ENCODE measurements at regions of chr3 and their contacts with region 1.

Region 1: GRCh38 chr3:187745201-187746058 is at the start of gene BCL6:
- DNase-seq: peak; percentile 96
- ATAC-seq: peak; percentile 88
- H3K4me3 ChIP-seq: peak within 1 kb of the TSS; percentile 84 to 90
- H3K27ac ChIP-seq: peak within 1 kb of the TSS; percentile 99 to 100
- H3K4me1 ChIP-seq: peaks cover 0 to 6% of the 10 kb centered on the region in 2 donors
- H3K27me3 ChIP-seq: no peaks in the 10 kb centered on the region
- total RNA-seq, gene BCL6: 136 to 154 TPM

Region 2: GRCh38 chr3:186759231-186759930 is 986.0 kb before region 1 on chr3:
- intact Hi-C with region 1: no loop called
- DNase-seq: no peak
- ATAC-seq: no peak
- H3K4me3 ChIP-seq: no peak overlapping the region
- H3K27ac ChIP-seq: no peak overlapping the region
- H3K4me1 ChIP-seq: no peaks in the 10 kb centered on the region
- H3K27me3 ChIP-seq: no peaks in the 10 kb centered on the region

Region 3: DNA sequence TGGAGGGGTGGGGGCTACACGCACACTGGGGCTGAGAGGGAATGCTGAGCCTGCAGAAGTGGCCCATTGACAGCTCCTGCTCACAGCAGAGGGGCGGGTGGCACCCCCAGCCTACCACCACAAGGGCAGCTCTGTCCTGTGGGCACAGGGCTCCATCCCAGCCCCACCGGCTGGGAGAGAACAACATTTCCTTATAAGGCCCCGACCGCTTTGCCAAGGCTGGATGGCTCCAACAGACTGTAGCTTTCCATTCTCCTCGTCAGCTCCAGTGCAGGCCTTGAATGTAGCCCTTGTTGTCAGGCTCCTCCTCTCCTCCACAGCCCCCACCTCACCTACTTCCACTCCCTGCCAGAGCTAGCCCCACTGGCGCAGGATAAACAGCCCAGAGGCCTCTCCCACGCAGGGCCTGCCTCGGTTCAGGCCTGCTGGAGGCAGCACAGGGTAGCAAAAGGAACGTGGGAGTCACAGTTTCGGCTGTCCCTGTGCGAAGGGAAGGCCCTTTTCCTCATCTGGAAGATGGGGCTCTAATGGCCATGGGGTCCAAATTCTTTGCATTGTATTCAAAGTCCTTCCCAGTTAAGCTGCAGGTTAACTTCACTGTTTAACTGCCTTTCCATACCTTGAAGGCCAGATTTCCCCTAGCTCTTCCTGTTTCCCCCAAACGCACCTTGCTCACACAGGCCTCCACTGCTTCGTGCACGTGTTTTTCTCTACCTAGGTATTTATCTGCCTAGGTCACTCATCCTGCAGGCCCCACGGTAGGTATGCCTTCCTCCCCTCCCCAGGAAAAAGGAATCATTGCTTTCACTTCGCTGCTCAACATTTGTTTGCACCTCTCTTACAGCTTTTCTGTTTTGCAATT is 307.0 kb after region 1 on chr3:
- intact Hi-C with region 1: loop called (anchors 5 kb)
- DNase-seq: peak; percentile 92
- ATAC-seq: peak; percentile 96
- H3K4me3 ChIP-seq: no peak overlapping the region
- H3K27ac ChIP-seq: peak overlapping the region; percentile 72 to 89
- H3K4me1 ChIP-seq: no peaks in the 10 kb centered on the region
- H3K27me3 ChIP-seq: no peaks in the 10 kb centered on the region

Region 4: GRCh38 chr3:188362405-188362831 is 617.0 kb after region 1 on chr3:
- intact Hi-C with region 1: loop called in 1 of 2 experiments (anchors 10 kb)
- DNase-seq: no peak
- ATAC-seq: no peak
- H3K4me3 ChIP-seq: no peak overlapping the region
- H3K27ac ChIP-seq: no peak overlapping the region
- H3K4me1 ChIP-seq: peaks cover 12 to 15% of the 10 kb centered on the region in 2 donors
- H3K27me3 ChIP-seq: no peaks in the 10 kb centered on the region

Region 5: DNA sequence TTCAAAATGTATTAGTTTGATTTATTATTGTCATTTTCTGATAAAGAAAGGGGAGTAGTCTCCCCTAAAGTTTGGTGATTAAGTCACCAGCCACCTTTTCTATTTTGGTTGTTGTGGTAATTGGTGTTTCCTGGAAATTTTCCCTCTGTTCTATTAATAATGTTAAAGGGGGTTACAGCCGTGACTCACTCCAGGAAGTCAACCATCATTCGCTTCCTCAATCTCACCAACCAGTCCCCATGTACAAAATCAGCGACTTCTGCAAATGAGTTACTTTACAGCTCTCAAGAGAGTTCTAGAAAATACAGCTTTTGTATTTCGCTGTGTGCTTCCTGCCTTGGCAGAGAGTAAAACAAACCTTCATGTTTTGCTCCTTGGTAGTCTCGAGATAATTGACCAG is 693.6 kb after region 1 on chr3:
- intact Hi-C with region 1: loop called in 1 of 2 experiments (anchors 10 kb)
- DNase-seq: no peak
- ATAC-seq: peak; percentile 63
- H3K4me3 ChIP-seq: no peak overlapping the region
- H3K27ac ChIP-seq: peak overlapping the region in 1 of 2 donors; percentile 50
- H3K4me1 ChIP-seq: peaks cover 7 to 11% of the 10 kb centered on the region in 2 donors
- H3K27me3 ChIP-seq: no peaks in the 10 kb centered on the region

Region 6: DNA sequence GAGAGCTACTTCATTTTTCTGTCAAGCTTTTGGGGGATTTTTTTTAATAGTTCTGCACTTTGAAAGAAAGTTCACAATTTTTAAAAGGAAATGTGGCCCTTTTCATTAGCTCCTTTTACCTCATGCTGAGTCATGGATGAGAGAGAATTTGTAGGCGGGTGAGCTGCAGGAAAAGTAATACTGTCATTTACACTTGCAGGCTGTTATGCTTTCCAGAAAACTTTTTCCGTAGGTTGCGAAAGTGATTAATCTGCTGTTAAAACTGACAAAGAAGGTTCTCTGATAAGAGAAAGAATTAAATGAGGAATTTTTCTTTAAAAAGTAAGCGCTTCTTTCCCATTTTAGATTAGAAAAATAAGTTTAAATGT is 838.7 kb after region 1 on chr3:
- intact Hi-C with region 1: loop called in 1 of 2 experiments (anchors 10 kb)
- DNase-seq: no peak
- ATAC-seq: peak; percentile 69
- H3K4me3 ChIP-seq: no peak overlapping the region
- H3K27ac ChIP-seq: peak overlapping the region in 1 of 2 donors; percentile 80
- H3K4me1 ChIP-seq: peaks cover 4 to 6% of the 10 kb centered on the region in 2 donors
- H3K27me3 ChIP-seq: no peaks in the 10 kb centered on the region

Region 7: DNA sequence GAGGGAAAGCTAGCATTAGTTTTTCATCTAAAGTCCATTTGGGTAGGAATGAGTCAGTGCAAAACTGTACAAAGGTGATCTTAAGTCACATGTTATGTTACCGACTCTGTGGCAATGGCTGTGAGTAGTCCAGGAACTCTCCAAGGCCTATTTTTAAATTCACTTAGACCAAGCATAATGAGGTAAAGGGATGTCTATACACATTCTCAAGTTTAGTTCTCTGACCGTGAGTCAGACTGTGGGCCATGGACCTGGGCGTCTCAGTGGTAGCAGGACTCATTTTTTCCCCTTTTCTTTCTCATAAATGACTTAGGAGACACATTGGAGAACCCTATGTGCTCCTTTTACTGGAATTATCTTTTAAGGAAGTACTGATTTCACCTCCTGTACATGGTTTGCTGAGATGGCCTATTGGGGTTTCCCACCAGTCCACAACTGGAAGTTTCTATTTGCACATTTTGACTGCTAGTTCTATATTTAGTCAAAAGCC is 937.6 kb after region 1 on chr3:
- intact Hi-C with region 1: loop called in 1 of 2 experiments (anchors 10 kb)
- DNase-seq: peak in 1 of 2 donors; percentile 69
- ATAC-seq: peak; percentile 76
- H3K4me3 ChIP-seq: no peak overlapping the region
- H3K27ac ChIP-seq: peak overlapping the region in 1 of 2 donors; percentile 32
- H3K4me1 ChIP-seq: peaks cover 13 to 34% of the 10 kb centered on the region in 2 donors
- H3K27me3 ChIP-seq: no peaks in the 10 kb centered on the region

Region 8: DNA sequence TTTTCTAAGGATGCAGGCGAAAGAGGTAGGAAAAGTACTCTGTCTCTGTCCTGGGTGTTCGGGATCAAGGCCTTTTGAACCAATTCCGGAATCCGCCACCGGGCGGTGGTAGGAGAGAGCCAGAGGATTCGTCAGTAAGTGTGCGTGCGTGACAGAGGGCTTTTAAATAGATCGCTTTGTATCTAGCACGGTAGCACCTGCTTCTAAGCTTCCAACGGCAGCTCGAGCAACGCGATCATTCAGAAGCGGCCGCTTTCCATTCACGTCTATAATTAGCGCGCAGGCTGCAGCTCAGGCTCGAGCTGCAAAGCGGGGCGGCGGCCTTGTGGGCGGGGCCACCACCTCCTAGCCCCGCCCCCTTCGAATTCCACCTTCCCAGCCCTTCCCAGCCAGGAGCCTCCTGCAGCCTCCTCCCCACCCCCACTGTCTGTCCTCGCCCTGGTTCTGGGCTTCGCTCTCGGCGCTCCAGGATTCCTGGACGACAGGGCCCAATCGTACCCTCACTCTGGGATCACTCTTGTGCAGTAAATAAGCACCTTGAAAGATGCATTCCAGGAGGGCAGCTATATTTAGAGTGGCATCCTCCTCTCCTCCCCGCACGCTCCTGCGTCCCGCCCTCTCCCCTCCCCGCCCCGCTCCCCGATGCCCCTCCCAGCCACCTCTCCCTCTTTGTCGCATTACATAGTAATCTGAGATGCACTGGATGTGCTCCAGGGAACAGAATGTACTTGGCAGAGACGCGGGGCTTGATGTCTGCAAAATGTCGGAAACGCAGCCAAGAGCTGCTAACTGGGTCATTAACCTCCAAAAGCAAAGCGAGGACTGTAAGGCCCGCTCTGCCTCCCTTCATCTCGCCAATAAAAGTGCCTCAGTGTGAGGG is 1202.2 kb after region 1 on chr3:
- intact Hi-C with region 1: loop called (anchors 2 to 5 kb)
- DNase-seq: peak; percentile 94 to 96
- ATAC-seq: peak; percentile 92
- H3K4me3 ChIP-seq: no peak overlapping the region
- H3K27ac ChIP-seq: peak overlapping the region; percentile 94 to 100
- H3K4me1 ChIP-seq: peaks cover 9 to 15% of the 10 kb centered on the region in 2 donors
- H3K27me3 ChIP-seq: no peaks in the 10 kb centered on the region

Measured in aorta (tissue), 5 donors.